ENCODE measurements at regions of chr20 and their contacts with region 1.

Region 1: GRCh38 chr20:40868551-40869217 is 159.9 kb upstream of the TOP1 start:
- DNase-seq: peak; percentile 29 to 77
- H3K4me3 ChIP-seq: no peak overlapping the region
- H3K27ac ChIP-seq: peak overlapping the region in 1 of 2 donors; percentile 72
- H3K4me1 ChIP-seq: peaks cover 6 to 16% of the 10 kb centered on the region in 2 donors
- H3K27me3 ChIP-seq: no peaks in the 10 kb centered on the region
- CTCF ChIP-seq: no peak

Region 2: DNA sequence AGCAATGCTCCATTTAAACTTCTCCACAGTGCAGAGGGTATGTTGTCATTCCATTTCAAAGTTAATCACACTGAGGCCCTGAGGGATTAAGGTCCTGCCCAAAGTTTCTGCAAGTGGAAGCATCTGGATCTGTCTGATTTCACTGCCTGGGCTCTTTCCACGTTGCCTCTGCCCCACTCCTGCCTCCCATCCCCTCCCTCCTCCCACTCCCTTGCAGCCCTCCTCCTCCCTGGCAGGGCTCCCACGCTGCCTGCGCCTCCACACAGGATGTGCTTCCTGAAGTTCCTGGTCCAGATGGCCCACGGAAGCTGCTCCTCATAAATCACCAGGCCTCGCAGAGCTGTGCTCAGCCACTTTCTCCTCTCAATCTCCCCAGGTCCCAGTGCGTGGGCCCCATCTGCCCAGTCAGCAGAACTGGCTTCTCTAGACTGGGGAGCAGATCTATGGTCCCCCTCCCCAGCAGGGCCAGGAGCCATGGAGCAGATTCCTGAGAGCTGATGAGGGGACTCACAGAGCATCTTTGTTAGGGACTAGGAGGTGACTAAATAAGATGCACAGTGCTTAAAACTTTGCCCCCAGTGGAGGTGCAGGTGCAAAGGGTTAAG is 114.2 kb before region 1 on chr20:
- intact Hi-C with region 1: loop called (anchors 5 kb)
- DNase-seq: no peak
- H3K4me3 ChIP-seq: no peak overlapping the region
- H3K27ac ChIP-seq: peak overlapping the region; percentile 54 to 68
- H3K4me1 ChIP-seq: peaks cover 10 to 27% of the 10 kb centered on the region in 2 donors
- H3K27me3 ChIP-seq: no peaks in the 10 kb centered on the region
- CTCF ChIP-seq: no peak

Region 3: GRCh38 chr20:40962730-40963504 is 94.2 kb after region 1 on chr20:
- intact Hi-C with region 1: no loop called
- DNase-seq: peak in 1 of 2 donors; percentile 75
- H3K4me3 ChIP-seq: no peak overlapping the region
- H3K27ac ChIP-seq: no peak overlapping the region
- H3K4me1 ChIP-seq: no peaks in the 10 kb centered on the region
- H3K27me3 ChIP-seq: no peaks in the 10 kb centered on the region
- CTCF ChIP-seq: peak; percentile 70 to 96 (median 83)